ENCODE measurements at regions of chr1 and their contacts with region 1.

Region 1: GRCh38 chr1:9249534-9250410 is 15.2 kb downstream of the H6PD start:
- DNase-seq: peak in 1 of 2 donors; percentile 45
- H3K4me3 ChIP-seq: no peak overlapping the region
- H3K27ac ChIP-seq: peak overlapping the region; percentile 71 to 72
- H3K4me1 ChIP-seq: peaks cover 12 to 49% (median 46%) of the 10 kb centered on the region in 4 donors
- H3K27me3 ChIP-seq: no peaks in the 10 kb centered on the region
- CTCF ChIP-seq: peak; percentile 49 to 55

Region 2: GRCh38 chr1:9129266-9130041 is 120.3 kb before region 1 on chr1:
- intact Hi-C with region 1: loop called (anchors 10 kb)
- DNase-seq: peak; percentile 83 to 92
- H3K4me3 ChIP-seq: peak overlapping the region; percentile 62 to 65
- H3K27ac ChIP-seq: peak overlapping the region; percentile 94 to 96
- H3K4me1 ChIP-seq: peaks cover 0 to 27% (median 17%) of the 10 kb centered on the region in 4 donors
- H3K27me3 ChIP-seq: no peaks in the 10 kb centered on the region
- CTCF ChIP-seq: no peak

Region 3: DNA sequence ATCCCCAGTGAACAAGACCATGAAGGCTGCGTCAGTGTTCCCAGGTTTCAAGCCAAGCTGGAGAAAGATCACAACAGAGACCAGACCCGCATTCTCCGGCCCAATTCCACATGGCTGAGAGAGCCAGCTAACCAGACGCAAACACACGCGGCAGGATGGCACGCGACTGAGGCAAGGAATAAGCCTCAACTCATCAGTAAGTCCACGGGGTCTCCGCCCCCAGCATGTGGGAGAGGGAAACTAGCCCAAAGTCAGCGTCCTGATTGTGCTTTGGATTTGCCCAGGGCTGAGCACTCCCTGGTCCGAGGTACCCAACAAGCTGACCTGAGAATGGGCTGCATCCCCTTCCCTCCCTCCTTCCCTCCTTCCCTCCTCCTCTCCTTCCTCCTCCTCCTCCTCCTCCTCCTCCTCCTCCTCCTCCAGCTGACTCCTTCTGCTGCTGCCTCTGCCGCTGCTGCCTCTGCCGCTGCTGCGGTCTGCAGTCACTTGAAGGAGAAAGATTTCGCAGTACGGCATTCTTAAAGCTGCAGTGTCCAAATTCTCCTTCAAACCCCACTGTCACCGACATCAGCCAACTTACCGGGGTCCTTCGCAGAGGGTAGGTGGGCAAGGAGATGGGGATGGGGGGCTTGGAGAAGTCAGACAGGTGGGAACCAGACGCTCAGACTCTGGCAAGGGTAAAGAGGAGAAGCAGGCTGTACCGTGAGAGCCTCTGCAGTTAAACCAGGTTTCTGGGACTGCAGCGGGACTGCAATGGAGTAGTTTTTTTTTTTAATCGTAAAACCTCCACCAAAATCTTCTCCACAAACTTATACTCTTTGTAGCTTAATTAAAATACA is 48.2 kb before region 1 on chr1:
- intact Hi-C with region 1: loop called (anchors 5 kb)
- DNase-seq: peak; percentile 43 to 76
- H3K4me3 ChIP-seq: peak overlapping the region; percentile 41 to 57
- H3K27ac ChIP-seq: peak overlapping the region; percentile 51 to 52
- H3K4me1 ChIP-seq: peaks cover 0 to 49% (median 34%) of the 10 kb centered on the region in 4 donors
- H3K27me3 ChIP-seq: peaks cover 0 to 34% of the 10 kb centered on the region in 2 donors
- CTCF ChIP-seq: no peak

Region 4: GRCh38 chr1:9213956-9214355 is 35.8 kb before region 1 on chr1:
- intact Hi-C with region 1: no loop called
- DNase-seq: no peak
- H3K4me3 ChIP-seq: no peak overlapping the region
- H3K27ac ChIP-seq: no peak overlapping the region
- H3K4me1 ChIP-seq: no peaks in the 10 kb centered on the region
- H3K27me3 ChIP-seq: peaks cover 0 to 13% of the 10 kb centered on the region in 2 donors
- CTCF ChIP-seq: no peak